Activated CD8-positive, alpha-beta T cell treated with anti-CD3 and anti-CD28 coated beads for 36 hours (primary cell): ENCODE measurements at regions of chr2 and their contacts with region 1.

Region 1: GRCh38 chr2:175203621-175204496 is 22.3 kb upstream of the ATP5MC3 start:
- DNase-seq: peak; percentile 77
- ATAC-seq: peak; percentile 95
- H3K4me3 Mint-ChIP-seq: no peak overlapping the region
- H3K27ac Mint-ChIP-seq: no peak overlapping the region
- H3K4me1 Mint-ChIP-seq: peaks cover 4% of the 10 kb centered on the region
- H3K27me3 Mint-ChIP-seq: peaks cover 16% of the 10 kb centered on the region
- CTCF ChIP-seq: peak; percentile 63

Region 2: GRCh38 chr2:175111200-175111657 is 92.6 kb before region 1 on chr2:
- CTCF ChIA-PET with region 1: interaction called, 10 read pairs
- POLR2A ChIA-PET with region 1: no interaction called
- intact Hi-C with region 1: no loop called
- DNase-seq: no peak
- ATAC-seq: peak; percentile 60
- H3K4me3 Mint-ChIP-seq: no peak overlapping the region
- H3K27ac Mint-ChIP-seq: peak overlapping the region; percentile 32
- H3K4me1 Mint-ChIP-seq: peaks cover 3% of the 10 kb centered on the region
- H3K27me3 Mint-ChIP-seq: no peaks in the 10 kb centered on the region
- CTCF ChIP-seq: peak; percentile 93

Region 3: DNA sequence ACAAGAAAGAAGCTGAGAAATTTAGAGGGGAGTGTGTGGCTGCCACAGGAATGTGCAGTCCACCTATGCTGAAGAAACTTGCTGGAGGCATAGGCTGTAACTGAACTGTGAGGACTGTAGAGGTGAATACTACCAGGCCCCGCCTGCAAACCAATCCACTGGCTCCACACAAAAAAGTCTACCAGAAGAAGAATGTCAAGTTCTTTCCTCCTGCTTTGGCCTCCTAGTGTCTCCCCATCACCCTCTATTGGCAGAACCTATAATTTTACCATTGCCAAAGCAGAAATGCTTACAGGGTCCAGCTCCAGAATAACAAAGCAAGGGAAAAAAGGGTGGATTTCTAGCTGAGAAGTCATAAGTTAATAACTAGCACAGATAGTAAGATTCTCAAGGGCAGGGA is 16.5 kb before region 1 on chr2:
- CTCF ChIA-PET with region 1: interaction called, 10 read pairs
- POLR2A ChIA-PET with region 1: no interaction called
- intact Hi-C with region 1: no loop called
- DNase-seq: peak; percentile 30
- ATAC-seq: peak; percentile 77
- H3K4me3 Mint-ChIP-seq: no peak overlapping the region
- H3K27ac Mint-ChIP-seq: no peak overlapping the region
- H3K4me1 Mint-ChIP-seq: no peaks in the 10 kb centered on the region
- H3K27me3 Mint-ChIP-seq: peaks cover 16% of the 10 kb centered on the region
- CTCF ChIP-seq: no peak

Region 4: GRCh38 chr2:175326801-175327200 is 122.9 kb after region 1 on chr2:
- CTCF ChIA-PET with region 1: interaction called, 21 read pairs
- POLR2A ChIA-PET with region 1: no interaction called
- intact Hi-C with region 1: no loop called
- DNase-seq: no peak
- ATAC-seq: no peak
- H3K4me3 Mint-ChIP-seq: no peak overlapping the region
- H3K27ac Mint-ChIP-seq: no peak overlapping the region
- H3K4me1 Mint-ChIP-seq: no peaks in the 10 kb centered on the region
- H3K27me3 Mint-ChIP-seq: peaks cover 4% of the 10 kb centered on the region
- CTCF ChIP-seq: no peak